CD4-positive, alpha-beta memory T cell (primary cell): ENCODE measurements at regions of chr16 and their contacts with region 1.

Region 1: GRCh38 chr16:58000706-58001676 is at the start of gene USB1:
- DNase-seq: peak; percentile 81 to 90 (median 85)
- H3K4me3 ChIP-seq: peak within 1 kb of the TSS; percentile 76 to 93
- H3K4me3 Mint-ChIP-seq: peak within 1 kb of the TSS; percentile 90 to 95 (median 92)
- H3K27ac ChIP-seq: peak within 1 kb of the TSS; percentile 75
- H3K27ac Mint-ChIP-seq: peak within 1 kb of the TSS; percentile 88 to 96 (median 94)
- H3K4me1 ChIP-seq: peaks cover 46% of the 10 kb centered on the region
- H3K4me1 Mint-ChIP-seq: peaks cover 40 to 75% (median 51%) of the 10 kb centered on the region in 4 donors
- H3K27me3 ChIP-seq: no peaks in the 10 kb centered on the region
- H3K27me3 Mint-ChIP-seq: no peaks in the 10 kb centered on the region
- total RNA-seq, gene USB1: 36.4 to 39.5 TPM

Region 2: GRCh38 chr16:57591086-57591869 is 409.7 kb before region 1 on chr16:
- CTCF ChIA-PET with region 1: no interaction called
- POLR2A ChIA-PET with region 1: no interaction called
- intact Hi-C with region 1: loop called (anchors 5 kb)
- DNase-seq: peak; percentile 49 to 60 (median 59)
- H3K4me3 ChIP-seq: no peak overlapping the region
- H3K4me3 Mint-ChIP-seq: peak overlapping the region in 6 of 8 donors; percentile 23 to 89 (median 56)
- H3K27ac ChIP-seq: no peak overlapping the region
- H3K27ac Mint-ChIP-seq: peak overlapping the region; percentile 8 to 91 (median 68)
- H3K4me1 ChIP-seq: peaks cover 35% of the 10 kb centered on the region
- H3K4me1 Mint-ChIP-seq: peaks cover 28 to 49% (median 35%) of the 10 kb centered on the region in 4 donors
- H3K27me3 ChIP-seq: no peaks in the 10 kb centered on the region
- H3K27me3 Mint-ChIP-seq: no peaks in the 10 kb centered on the region

Region 3: DNA sequence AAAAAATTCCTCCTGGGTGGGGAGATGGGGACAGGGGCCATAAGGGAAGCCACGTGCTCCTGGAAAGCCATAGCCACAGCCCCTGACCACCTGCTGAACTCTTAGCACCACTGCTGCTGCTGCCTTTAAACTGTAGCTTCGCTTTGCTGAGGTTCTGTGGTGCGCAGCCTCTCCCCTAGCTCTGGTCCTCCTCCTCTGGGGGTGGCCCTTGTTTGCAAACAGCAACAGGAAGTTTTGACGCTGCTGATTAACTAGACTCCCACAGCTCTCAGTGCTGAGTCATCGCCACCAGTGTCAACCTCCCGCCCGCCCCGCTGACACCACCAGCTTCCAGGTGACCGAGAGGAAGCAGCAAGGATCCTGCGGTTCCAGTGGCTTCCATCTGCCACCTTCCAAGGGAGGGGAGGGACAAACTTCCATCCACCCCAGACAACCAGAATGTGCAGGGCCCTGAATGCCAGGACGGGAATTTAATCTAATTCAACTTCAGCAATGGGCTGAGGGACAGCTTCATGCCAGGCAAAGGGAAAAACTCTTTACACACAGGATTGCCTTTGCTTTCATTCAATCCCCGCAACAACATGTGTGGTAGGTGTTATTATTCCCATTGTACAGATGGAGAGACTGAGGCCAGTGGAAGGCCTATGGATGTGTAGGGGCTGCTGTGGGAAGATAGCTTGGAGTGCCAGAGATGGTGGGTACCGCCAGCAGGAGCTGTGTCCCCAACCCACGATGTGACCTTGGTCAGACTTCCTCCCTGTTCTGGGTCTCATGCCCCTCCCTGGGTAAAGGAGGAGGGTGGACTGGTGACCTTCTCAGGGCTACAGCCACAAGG is 190.6 kb before region 1 on chr16:
- CTCF ChIA-PET with region 1: interaction called, 4 read pairs
- POLR2A ChIA-PET with region 1: interaction called, 10 read pairs
- intact Hi-C with region 1: no loop called
- DNase-seq: peak; percentile 73 to 91 (median 78)
- H3K4me3 ChIP-seq: peak overlapping the region in 1 of 2 donors; percentile 38
- H3K4me3 Mint-ChIP-seq: peak overlapping the region in 7 of 8 donors; percentile 33 to 83 (median 67)
- H3K27ac ChIP-seq: peak overlapping the region; percentile 23
- H3K27ac Mint-ChIP-seq: peak overlapping the region; percentile 83 to 94 (median 91)
- H3K4me1 ChIP-seq: peaks cover 35% of the 10 kb centered on the region
- H3K4me1 Mint-ChIP-seq: peaks cover 16 to 51% (median 25%) of the 10 kb centered on the region in 4 donors
- H3K27me3 ChIP-seq: no peaks in the 10 kb centered on the region
- H3K27me3 Mint-ChIP-seq: peaks cover 2 to 7% of the 10 kb centered on the region in 2 donors

Region 4: DNA sequence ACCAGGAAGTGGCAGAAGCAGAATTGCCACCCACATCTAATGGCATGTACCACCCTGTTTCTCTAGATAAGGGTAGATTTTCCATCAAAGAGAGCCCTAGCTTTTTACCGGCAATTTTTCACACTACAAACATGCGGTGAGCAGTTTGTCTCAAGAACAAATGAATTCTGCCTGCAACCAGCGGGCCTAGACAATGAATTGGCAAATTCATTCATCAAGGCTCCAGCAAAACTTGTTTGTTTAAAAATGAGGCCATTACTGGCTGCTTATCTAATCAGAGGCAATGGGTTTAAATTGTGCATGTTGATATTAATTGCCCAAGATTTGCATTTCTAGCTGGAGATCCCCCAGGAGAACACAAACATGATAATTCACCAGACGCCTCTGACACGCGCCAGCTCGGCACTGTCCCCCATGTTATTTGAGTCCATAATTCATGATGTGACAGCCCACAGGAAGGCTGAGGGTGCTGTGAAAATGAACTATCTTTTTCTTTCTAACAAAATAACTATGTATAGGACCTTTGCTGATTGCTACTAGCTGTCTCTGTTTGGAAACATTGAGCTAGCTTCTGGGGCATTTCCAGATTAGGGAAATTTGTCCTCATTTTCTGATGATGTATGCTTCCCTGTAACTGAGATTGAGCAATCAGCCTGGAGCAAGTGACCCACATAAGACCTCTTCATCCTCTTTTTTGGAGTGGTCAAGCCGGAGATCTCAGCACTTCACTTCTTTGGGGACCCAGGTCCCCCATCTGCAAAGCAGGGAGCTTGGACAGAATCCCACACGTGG is 110.8 kb before region 1 on chr16:
- CTCF ChIA-PET with region 1: no interaction called
- POLR2A ChIA-PET with region 1: no interaction called
- intact Hi-C with region 1: no loop called
- DNase-seq: no peak
- H3K4me3 ChIP-seq: no peak overlapping the region
- H3K4me3 Mint-ChIP-seq: no peak overlapping the region
- H3K27ac ChIP-seq: no peak overlapping the region
- H3K27ac Mint-ChIP-seq: no peak overlapping the region
- H3K4me1 ChIP-seq: peaks cover 13% of the 10 kb centered on the region
- H3K4me1 Mint-ChIP-seq: peaks cover 9 to 16% (median 10%) of the 10 kb centered on the region in 4 donors
- H3K27me3 ChIP-seq: no peaks in the 10 kb centered on the region
- H3K27me3 Mint-ChIP-seq: peaks cover 33 to 48% of the 10 kb centered on the region in 2 donors

Region 5: GRCh38 chr16:57906382-57907316 is 94.3 kb before region 1 on chr16:
- CTCF ChIA-PET with region 1: interaction called, 115 read pairs
- POLR2A ChIA-PET with region 1: interaction called, 11 read pairs
- intact Hi-C with region 1: no loop called
- DNase-seq: peak in 1 of 5 donors; percentile 9
- H3K4me3 ChIP-seq: no peak overlapping the region
- H3K4me3 Mint-ChIP-seq: no peak overlapping the region
- H3K27ac ChIP-seq: no peak overlapping the region
- H3K27ac Mint-ChIP-seq: no peak overlapping the region
- H3K4me1 ChIP-seq: no peaks in the 10 kb centered on the region
- H3K4me1 Mint-ChIP-seq: no peaks in the 10 kb centered on the region
- H3K27me3 ChIP-seq: no peaks in the 10 kb centered on the region
- H3K27me3 Mint-ChIP-seq: peaks cover 4 to 10% of the 10 kb centered on the region in 2 donors

Region 6: GRCh38 chr16:58025351-58026138 is 24.6 kb after region 1 on chr16 and contains the start of gene MMP15:
- CTCF ChIA-PET with region 1: interaction called, 3 read pairs
- POLR2A ChIA-PET with region 1: interaction called, 6 read pairs
- intact Hi-C with region 1: loop called (anchors 1 kb)
- DNase-seq: peak; percentile 50 to 77 (median 56)
- H3K4me3 ChIP-seq: peak within 1 kb of the TSS; percentile 11 to 53
- H3K4me3 Mint-ChIP-seq: peak within 1 kb of the TSS; percentile 89 to 99 (median 93)
- H3K27ac ChIP-seq: peak within 1 kb of the TSS; percentile 34
- H3K27ac Mint-ChIP-seq: peak within 1 kb of the TSS; percentile 81 to 93 (median 91)
- H3K4me1 ChIP-seq: peaks cover 19% of the 10 kb centered on the region
- H3K4me1 Mint-ChIP-seq: peaks cover 6 to 29% (median 18%) of the 10 kb centered on the region in 4 donors
- H3K27me3 ChIP-seq: no peaks in the 10 kb centered on the region
- H3K27me3 Mint-ChIP-seq: peaks cover 0 to 1% of the 10 kb centered on the region in 2 donors
- total RNA-seq, gene MMP15: 1.6 to 1.8 TPM